ENCODE measurements at regions of chr14 and their contacts with region 1.

Region 1: DNA sequence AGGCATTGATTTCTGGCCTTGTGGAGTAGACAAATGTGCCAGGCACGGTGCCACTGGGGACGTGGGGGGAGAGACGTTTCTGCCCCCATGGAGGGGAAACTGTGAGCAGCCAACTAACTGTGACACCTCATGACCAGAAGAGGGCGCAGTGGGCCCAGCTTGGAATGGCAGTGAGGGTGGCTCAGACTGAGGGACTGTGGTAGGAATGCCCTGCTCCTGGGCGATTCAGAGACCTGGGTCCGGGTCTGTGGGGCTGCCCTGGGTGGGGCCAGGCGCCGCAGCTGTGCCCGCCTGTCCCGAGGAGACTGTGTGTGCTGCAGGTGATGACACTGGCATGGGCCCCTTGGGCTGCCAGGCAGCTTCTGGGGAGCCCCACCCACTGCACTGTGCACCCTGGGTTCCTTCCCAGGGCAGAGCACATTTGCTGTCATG is 60.6 kb downstream of the SLC25A47 start:
- DNase-seq: peak; percentile 84
- H3K4me3 ChIP-seq: no peak overlapping the region
- H3K27ac ChIP-seq: peak overlapping the region; percentile 34
- H3K4me1 ChIP-seq: peaks cover 41% of the 10 kb centered on the region
- H3K27me3 ChIP-seq: no peaks in the 10 kb centered on the region
- CTCF ChIP-seq: peak; percentile 89

Region 2: GRCh38 chr14:100049220-100049619 is 334.5 kb before region 1 on chr14:
- CTCF ChIA-PET with region 1: no interaction called
- POLR2A ChIA-PET with region 1: interaction called, 10 read pairs
- intact Hi-C with region 1: no loop called
- DNase-seq: no peak
- H3K4me3 ChIP-seq: no peak overlapping the region
- H3K27ac ChIP-seq: no peak overlapping the region
- H3K4me1 ChIP-seq: no peaks in the 10 kb centered on the region
- H3K27me3 ChIP-seq: no peaks in the 10 kb centered on the region
- CTCF ChIP-seq: no peak

Region 3: GRCh38 chr14:100434033-100434601 is 50.4 kb after region 1 on chr14:
- CTCF ChIA-PET with region 1: no interaction called
- POLR2A ChIA-PET with region 1: no interaction called
- intact Hi-C with region 1: no loop called
- DNase-seq: no peak
- H3K4me3 ChIP-seq: no peak overlapping the region
- H3K27ac ChIP-seq: no peak overlapping the region
- H3K4me1 ChIP-seq: peaks cover 16% of the 10 kb centered on the region
- H3K27me3 ChIP-seq: no peaks in the 10 kb centered on the region
- CTCF ChIP-seq: no peak

Region 4: GRCh38 chr14:100524933-100525243 is 141.1 kb after region 1 on chr14:
- CTCF ChIA-PET with region 1: interaction called, 8 read pairs
- POLR2A ChIA-PET with region 1: no interaction called
- intact Hi-C with region 1: loop called (anchors 10 kb)
- DNase-seq: peak; percentile 47
- H3K4me3 ChIP-seq: no peak overlapping the region
- H3K27ac ChIP-seq: no peak overlapping the region
- H3K4me1 ChIP-seq: peaks cover 4% of the 10 kb centered on the region
- H3K27me3 ChIP-seq: no peaks in the 10 kb centered on the region
- CTCF ChIP-seq: peak; percentile 73

Region 5: DNA sequence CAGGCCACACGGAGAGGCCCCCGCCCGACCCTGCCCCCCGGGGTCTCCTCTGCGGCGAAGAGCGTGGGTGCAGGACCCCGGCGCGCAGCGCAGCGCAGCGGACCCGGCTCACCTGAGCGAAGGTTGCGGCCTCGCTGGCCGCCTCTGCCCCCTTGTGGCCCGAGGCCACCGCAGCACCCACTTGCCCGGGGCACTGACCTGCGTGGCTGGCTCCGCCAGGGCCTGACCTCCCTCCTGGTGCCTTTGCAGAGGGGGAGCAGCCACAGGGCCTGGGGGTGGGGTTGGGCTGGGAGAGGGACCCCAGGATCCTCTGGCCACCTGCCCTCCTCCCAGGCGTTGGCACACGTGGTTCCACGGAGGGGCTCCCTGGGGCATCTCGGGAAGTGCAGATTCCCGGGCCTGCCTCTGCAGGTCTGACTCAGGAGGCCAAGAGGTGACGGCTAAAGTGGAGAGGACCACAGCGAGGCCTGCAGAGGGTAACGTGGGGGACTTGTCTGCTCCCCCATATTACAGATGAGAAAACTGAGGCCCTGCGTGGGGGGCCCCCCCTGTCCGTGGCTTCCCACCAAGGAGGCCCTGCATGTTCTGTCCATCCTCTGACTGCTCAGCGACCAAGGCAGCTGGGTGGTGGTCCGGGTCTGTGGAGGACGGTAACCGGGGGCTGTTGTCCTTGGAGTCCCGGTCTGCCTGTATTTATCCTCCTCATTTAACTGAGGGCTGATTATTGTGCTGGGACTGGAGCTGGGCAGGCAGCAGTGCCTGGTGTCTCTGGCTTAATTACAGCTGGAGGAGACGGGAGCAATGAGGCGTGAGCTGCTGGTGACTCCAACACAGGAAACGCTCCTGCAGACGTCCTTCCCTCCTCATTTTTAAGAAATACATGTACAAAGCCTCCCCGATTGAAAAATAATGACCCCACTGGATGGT is 271.3 kb after region 1 on chr14:
- CTCF ChIA-PET with region 1: interaction called, 10 read pairs
- POLR2A ChIA-PET with region 1: no interaction called
- intact Hi-C with region 1: loop called (anchors 2 kb)
- DNase-seq: peak; percentile 63
- H3K4me3 ChIP-seq: no peak overlapping the region
- H3K27ac ChIP-seq: no peak overlapping the region
- H3K4me1 ChIP-seq: peaks cover 10% of the 10 kb centered on the region
- H3K27me3 ChIP-seq: no peaks in the 10 kb centered on the region
- CTCF ChIP-seq: no peak; the same call in 1 of the 2 replicates

Region 6: DNA sequence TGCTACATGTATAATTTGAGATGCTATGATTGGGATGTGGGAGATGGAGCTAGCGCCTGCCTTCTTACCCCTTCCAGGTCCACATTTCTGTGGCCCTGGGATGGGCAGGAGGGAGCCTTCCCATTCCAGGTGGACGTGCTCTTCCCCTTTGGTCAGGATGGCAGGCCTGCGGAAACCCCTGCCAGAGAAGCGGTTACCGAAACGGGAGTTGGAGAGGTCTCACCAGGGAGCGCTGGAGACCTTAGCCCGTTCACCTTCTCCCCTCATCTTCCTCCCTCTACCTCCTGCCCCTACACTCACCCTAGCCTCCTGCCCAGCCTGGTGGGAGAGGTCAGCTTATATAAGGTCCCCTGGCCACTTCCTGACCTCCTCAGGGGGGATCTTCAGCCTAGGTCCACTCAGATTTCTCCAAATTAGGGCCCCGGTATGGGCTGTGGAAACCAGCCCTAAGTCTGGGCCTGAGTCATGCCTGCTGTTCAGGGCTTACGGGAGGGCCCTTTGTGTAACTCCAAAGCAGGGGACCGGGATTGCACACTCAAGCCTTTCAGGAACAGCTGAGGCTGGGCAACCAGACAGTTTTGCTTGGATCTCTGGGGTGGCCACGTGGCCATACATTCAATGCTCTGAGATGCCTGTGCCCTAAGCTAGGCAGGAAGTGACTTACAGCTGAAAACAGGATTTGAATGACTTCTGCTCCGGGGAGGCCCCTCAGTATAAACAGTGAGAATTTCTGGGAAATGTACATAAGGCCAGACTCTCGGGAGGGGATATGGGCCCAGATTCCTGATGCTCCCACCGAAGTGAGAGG is 431.9 kb after region 1 on chr14:
- CTCF ChIA-PET with region 1: no interaction called
- POLR2A ChIA-PET with region 1: no interaction called
- intact Hi-C with region 1: no loop called
- DNase-seq: no peak
- H3K4me3 ChIP-seq: no peak overlapping the region
- H3K27ac ChIP-seq: no peak overlapping the region
- H3K4me1 ChIP-seq: no peaks in the 10 kb centered on the region
- H3K27me3 ChIP-seq: no peaks in the 10 kb centered on the region
- CTCF ChIP-seq: no peak

Region 7: DNA sequence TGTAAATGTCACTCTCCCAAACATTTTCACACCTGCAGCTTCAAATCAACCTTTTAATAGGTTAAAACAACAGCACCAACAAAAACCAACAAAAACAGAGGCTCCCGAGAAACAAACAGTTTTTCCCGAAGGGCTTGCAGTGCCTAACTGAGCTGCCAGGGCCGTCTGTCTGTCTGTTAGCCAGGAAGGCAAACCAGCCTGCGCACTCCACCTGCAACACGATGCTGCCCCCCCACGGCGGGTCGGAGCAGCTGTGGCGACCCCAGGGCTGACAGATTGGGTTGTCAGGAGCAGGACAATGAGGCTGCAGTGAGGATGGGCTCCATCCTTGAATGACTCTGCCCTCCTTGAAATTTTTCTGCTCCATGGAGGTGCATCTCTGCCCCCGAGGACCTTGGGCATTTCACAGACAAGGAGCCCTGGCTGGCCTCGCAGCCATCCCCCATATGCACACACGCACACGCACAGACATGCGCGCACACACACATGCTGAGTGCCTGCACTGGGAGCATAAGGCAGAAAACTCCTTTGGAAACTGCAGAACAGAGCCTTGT is 517.2 kb after region 1 on chr14:
- CTCF ChIA-PET with region 1: no interaction called
- POLR2A ChIA-PET with region 1: no interaction called
- intact Hi-C with region 1: loop called (anchors 5 kb)
- DNase-seq: peak; percentile 33
- H3K4me3 ChIP-seq: no peak overlapping the region
- H3K27ac ChIP-seq: no peak overlapping the region
- H3K4me1 ChIP-seq: peaks cover 39% of the 10 kb centered on the region
- H3K27me3 ChIP-seq: peaks cover 13% of the 10 kb centered on the region
- CTCF ChIP-seq: peak; percentile 56

Region 8: GRCh38 chr14:101628471-101628966 is 1244.8 kb after region 1 on chr14:
- CTCF ChIA-PET with region 1: interaction called, 3 read pairs
- POLR2A ChIA-PET with region 1: interaction called, 8 read pairs
- intact Hi-C with region 1: loop called (anchors 2 kb)
- DNase-seq: peak; percentile 83
- H3K4me3 ChIP-seq: peak overlapping the region; percentile 30
- H3K27ac ChIP-seq: no peak overlapping the region
- H3K4me1 ChIP-seq: peaks cover 6% of the 10 kb centered on the region
- H3K27me3 ChIP-seq: peaks cover 3% of the 10 kb centered on the region
- CTCF ChIP-seq: peak; percentile 95